ENCODE measurements at regions of chr2 and their contacts with region 1.

Region 1: DNA sequence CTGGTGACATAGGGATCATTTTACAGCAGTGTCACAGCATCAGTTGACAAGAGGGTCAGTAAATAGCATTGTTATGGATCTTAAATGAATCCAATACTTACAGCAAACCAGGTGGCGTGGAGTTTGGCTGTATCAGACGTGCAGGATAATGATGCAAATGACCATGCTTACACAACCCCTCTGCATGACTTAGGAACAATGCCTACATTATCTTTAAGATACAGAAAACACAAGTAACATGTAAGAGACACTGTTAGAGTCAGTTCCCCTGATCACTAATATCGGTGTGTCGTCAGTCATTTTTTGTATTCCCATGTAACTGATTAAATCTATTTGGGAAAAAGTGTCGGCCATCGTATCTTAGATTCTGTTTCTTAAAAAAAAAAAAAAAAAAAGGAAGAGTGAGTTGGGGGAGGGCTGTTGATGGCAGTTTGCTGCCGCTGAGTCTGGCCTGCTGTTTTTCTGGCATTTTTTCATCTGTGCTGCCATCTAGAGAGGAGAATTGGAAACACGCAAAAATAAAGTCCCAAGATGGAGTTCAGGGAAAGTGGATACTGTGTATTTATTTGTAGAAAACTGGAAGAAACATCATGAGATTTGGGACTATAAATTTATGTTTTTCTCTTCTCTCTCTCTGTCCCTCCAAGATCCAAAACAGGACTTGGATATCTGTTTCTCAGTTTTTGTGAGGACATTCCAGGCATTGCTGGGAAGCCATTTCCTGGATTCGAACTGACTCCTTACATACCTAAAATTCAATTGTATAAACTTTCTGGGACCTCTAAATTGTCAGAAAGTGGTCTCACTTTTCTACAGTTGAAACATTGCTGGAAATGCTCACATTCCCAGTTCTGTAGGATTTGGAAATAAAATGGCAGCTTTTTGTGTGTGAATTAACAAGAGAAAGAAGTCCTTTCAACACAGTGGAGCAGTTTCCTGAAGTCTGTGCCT is 60.3 kb upstream of the AGPS start:
- DNase-seq: peak; percentile 22
- H3K4me3 ChIP-seq: peak overlapping the region; percentile 12
- H3K27ac ChIP-seq: peak overlapping the region; percentile 12
- H3K4me1 ChIP-seq: peaks cover 5% of the 10 kb centered on the region
- H3K27me3 ChIP-seq: no peaks in the 10 kb centered on the region
- CTCF ChIP-seq: peak; percentile 73

Region 2: GRCh38 chr2:177263451-177264208 is 68.7 kb before region 1 on chr2:
- intact Hi-C with region 1: loop called (anchors 5 kb)
- DNase-seq: peak; percentile 99
- H3K4me3 ChIP-seq: peak overlapping the region; percentile 90
- H3K27ac ChIP-seq: peak overlapping the region; percentile 100
- H3K4me1 ChIP-seq: peaks cover 76% of the 10 kb centered on the region
- H3K27me3 ChIP-seq: no peaks in the 10 kb centered on the region
- CTCF ChIP-seq: peak; percentile 90

Region 3: GRCh38 chr2:177400337-177400923 is 68.1 kb after region 1 on chr2:
- intact Hi-C with region 1: no loop called
- DNase-seq: no peak
- H3K4me3 ChIP-seq: no peak overlapping the region
- H3K27ac ChIP-seq: peak overlapping the region; percentile 32
- H3K4me1 ChIP-seq: peaks cover 90% of the 10 kb centered on the region
- H3K27me3 ChIP-seq: no peaks in the 10 kb centered on the region
- CTCF ChIP-seq: no peak

Region 4: DNA sequence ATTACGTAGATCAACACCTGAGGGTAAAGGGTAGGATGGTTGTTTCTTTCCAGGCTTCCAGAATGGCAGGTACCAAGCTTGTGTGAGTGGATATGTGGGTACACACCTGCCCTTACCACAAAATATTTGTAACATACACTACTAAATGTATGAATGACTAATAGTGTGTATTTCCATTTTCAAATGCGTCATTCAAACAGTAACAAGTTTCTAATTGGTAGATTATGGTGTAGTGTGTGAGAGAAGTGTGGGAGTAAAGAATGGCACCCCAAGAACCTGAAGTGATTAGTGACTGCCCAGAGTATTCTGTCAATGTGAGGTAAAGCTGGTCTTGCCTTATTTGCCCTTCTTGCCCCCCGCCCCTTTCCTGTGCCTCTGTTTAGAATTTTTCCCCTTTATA is 81.4 kb after region 1 on chr2:
- intact Hi-C with region 1: loop called (anchors 2 kb)
- DNase-seq: no peak
- H3K4me3 ChIP-seq: no peak overlapping the region
- H3K27ac ChIP-seq: no peak overlapping the region
- H3K4me1 ChIP-seq: peaks cover 22% of the 10 kb centered on the region
- H3K27me3 ChIP-seq: no peaks in the 10 kb centered on the region
- CTCF ChIP-seq: no peak

Region 5: DNA sequence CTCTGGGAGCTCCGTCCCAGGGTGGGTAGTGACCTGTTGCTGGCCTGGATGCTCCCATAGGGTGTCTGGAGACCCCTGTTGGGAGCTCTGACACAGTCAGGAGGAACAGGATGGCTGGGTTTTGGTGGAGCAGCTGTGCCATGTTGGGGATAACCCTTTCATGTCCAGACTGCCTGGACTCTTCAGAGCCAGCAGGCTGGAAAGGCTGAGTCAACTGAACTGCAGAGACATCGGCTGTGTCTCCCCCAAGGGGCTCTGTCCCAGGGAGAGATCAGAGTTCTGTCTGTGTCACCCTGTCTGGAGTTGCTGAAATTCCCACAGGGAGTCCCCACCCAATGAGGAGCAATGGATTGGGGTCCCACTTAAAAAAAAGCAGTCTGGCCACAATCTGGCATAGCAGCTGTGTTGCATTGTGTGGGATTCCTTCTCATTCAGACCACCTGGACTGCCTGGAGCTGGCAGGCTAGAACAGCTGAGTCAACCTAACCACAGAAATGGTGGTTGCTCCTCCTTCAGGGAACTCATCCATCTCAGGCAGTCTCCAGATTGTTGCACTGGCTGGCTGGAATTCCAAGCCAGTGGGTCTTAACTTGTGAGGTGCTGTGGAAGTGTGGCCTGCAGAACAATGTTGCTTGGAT is 97.5 kb after region 1 on chr2:
- intact Hi-C with region 1: no loop called
- DNase-seq: no peak
- H3K4me3 ChIP-seq: no peak overlapping the region
- H3K27ac ChIP-seq: no peak overlapping the region
- H3K4me1 ChIP-seq: no peaks in the 10 kb centered on the region
- H3K27me3 ChIP-seq: no peaks in the 10 kb centered on the region
- CTCF ChIP-seq: no peak

Region 6: GRCh38 chr2:177724398-177725287 is 392.3 kb after region 1 on chr2:
- intact Hi-C with region 1: loop called (anchors 10 kb)
- DNase-seq: peak; percentile 32
- H3K4me3 ChIP-seq: no peak overlapping the region
- H3K27ac ChIP-seq: peak overlapping the region; percentile 7
- H3K4me1 ChIP-seq: no peaks in the 10 kb centered on the region
- H3K27me3 ChIP-seq: no peaks in the 10 kb centered on the region
- CTCF ChIP-seq: peak; percentile 92